ENCODE measurements at regions of chr12 and their contacts with region 1.

Region 1: DNA sequence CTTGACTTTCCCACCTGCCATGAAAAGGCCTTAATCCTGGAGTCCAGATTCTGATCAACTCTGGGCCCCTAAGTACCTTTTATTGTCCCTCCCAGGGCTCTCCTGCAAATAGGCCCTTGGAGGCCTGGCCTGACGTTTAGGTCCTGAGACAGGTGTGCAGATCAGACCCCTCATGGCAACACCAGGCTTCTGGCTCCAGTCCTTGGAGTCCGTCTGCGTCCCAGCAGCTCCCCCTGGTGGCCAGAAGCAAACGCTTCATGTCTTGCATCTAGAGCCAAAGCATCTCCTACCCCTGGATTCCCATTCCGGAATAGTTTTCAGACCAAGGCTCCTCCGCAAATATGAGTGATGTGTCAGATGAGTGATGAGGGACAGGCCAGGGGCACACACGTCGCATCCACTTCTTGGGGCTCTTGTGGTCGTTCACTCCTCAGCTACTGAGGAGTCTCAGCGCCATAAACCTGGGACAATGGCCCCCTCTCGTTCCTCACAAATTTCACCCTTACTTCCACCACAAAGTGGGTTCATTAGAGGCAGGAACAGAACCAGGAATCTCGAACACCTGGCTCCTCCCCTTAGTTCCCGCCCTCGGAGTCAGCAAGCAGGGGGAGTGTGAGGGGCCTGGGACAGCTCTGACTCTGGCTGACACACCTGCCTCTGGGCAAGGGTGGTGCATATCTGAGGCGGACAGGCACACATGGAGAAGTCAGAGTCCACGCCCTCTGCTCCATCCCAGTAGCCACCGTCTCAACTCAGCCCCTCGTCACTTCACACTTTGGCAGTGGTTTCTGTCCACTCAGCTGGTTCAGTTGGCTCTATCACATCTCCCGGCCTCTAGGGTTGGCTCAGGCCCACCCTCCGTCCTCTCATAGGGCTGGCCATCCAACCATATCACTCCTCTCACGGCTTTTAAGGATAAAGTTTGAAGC is 77.9 kb upstream of the PWP1 start:
- DNase-seq: peak; percentile 55
- H3K4me3 ChIP-seq: no peak overlapping the region
- H3K27ac ChIP-seq: no peak overlapping the region
- H3K4me1 ChIP-seq: peaks cover 3% of the 10 kb centered on the region
- H3K27me3 ChIP-seq: no peaks in the 10 kb centered on the region
- CTCF ChIP-seq: peak; percentile 95 to 96

Region 2: DNA sequence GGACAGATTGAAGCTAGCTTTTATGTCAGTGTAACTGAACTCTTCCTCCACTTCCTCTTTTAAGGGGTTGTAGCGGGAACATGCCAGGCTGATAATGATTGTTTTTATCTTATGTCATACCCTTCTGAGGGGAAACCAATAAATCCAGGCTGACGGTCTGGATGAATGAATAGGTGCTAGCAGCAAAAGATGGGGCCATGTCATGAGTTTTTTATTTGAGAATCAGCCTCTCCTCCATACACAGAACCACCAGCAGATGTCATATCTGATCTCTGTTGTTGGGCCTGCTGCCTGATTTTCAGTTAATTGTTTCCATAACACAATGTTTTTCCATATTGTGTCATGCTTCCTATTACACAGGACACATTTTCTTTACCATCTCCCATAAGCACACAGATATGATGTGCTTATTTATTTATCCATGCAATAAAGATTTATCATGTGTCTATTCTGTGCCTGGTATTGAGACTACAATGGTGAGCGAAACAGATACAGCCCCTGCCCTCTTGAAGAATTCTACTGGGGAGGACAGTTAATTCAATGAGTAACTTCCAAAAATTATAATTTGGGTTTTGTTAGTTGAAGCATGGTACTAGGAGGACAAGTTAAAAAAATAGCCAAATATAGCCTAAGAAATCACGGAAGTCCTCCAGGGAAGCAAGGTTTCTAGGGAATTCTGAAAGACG is 480.8 kb before region 1 on chr12:
- CTCF ChIA-PET with region 1: interaction called, 6 read pairs
- dilution Hi-C with region 1: loop called (anchors 5 kb)
- in situ Hi-C with region 1: loop called (anchors 5 kb)
- intact Hi-C with region 1: loop called (anchors 1 kb)
- DNase-seq: peak; percentile 7
- H3K4me3 ChIP-seq: no peak overlapping the region
- H3K27ac ChIP-seq: no peak overlapping the region
- H3K4me1 ChIP-seq: no peaks in the 10 kb centered on the region
- H3K27me3 ChIP-seq: no peaks in the 10 kb centered on the region
- CTCF ChIP-seq: peak; percentile 35 to 60

Region 3: DNA sequence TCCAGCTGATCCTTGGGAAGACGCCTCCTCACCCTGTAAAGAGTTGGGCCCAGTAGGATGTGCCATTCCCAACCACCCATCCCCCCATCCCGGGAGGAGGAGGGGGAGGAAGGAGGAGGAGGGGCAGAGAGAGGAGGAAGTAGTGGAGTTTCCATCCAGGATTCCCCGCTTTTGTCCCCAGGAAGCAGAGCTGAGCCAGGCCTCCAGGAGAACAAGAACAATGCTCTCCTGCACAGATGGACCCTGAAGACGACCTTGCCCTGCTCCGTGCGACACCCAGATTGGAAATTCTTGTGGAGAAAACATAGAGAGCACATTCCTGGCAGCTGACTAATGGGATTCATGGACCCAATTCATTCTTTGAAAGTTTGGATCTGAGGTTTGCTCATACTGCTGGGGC is 382.1 kb before region 1 on chr12:
- CTCF ChIA-PET with region 1: no interaction called
- dilution Hi-C with region 1: no loop called
- in situ Hi-C with region 1: no loop called
- intact Hi-C with region 1: loop called (anchors 5 kb)
- DNase-seq: no peak
- H3K4me3 ChIP-seq: no peak overlapping the region
- H3K27ac ChIP-seq: no peak overlapping the region
- H3K4me1 ChIP-seq: no peaks in the 10 kb centered on the region
- H3K27me3 ChIP-seq: no peaks in the 10 kb centered on the region
- CTCF ChIP-seq: no peak

Region 4: GRCh38 chr12:107448198-107448597 is 159.5 kb before region 1 on chr12:
- CTCF ChIA-PET with region 1: no interaction called
- dilution Hi-C with region 1: no loop called
- in situ Hi-C with region 1: no loop called
- intact Hi-C with region 1: loop called (anchors 1 kb)
- DNase-seq: no peak
- H3K4me3 ChIP-seq: no peak overlapping the region
- H3K27ac ChIP-seq: no peak overlapping the region
- H3K4me1 ChIP-seq: peaks cover 25% of the 10 kb centered on the region
- H3K27me3 ChIP-seq: no peaks in the 10 kb centered on the region
- CTCF ChIP-seq: peak; percentile 42 to 48

Region 5: DNA sequence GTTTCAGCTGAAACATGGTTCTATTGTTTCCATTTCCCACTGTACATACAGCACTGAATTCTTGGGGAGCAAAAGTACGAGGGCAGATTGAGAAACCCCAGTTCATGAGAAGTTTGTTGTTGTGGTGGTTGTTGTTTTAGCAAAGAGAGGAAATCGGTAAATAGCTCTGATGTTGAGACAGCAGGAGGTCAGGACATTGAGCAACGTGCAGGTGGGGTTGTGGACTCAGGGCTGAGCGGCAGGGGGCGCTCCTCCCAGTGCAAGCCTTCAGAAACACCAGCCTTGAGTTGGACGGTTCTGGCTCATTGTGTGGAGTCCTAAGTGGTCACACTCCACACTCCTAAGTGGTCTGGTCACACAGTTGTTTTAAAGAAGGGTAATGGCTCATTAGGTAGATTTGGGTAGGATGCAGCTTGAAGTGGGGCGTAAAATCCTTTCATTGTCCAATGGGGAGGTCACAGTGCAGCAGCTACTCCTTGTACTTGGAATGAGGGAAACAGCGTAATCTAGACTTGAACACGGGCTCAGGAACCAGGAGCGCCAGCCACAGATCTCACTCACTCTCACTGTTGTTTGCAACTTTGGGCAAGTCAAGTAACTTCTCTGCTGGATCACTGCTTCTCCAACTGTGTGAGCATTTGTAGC is 63.4 kb after region 1 on chr12:
- CTCF ChIA-PET with region 1: no interaction called
- dilution Hi-C with region 1: loop called (anchors 10 kb)
- in situ Hi-C with region 1: no loop called
- intact Hi-C with region 1: no loop called
- DNase-seq: no peak
- H3K4me3 ChIP-seq: no peak overlapping the region
- H3K27ac ChIP-seq: no peak overlapping the region
- H3K4me1 ChIP-seq: no peaks in the 10 kb centered on the region
- H3K27me3 ChIP-seq: no peaks in the 10 kb centered on the region
- CTCF ChIP-seq: peak; percentile 51 to 63

Measured in mammary epithelial cell (primary cell).